ENCODE measurements at regions of chr19 and their contacts with region 1.

Region 1: GRCh38 chr19:49327878-49328544 is 3.0 kb upstream of the SLC6A16 start:
- DNase-seq: peak; percentile 57
- H3K4me3 Mint-ChIP-seq: no peak overlapping the region
- H3K27ac Mint-ChIP-seq: no peak overlapping the region
- H3K4me1 Mint-ChIP-seq: no peaks in the 10 kb centered on the region
- H3K27me3 Mint-ChIP-seq: peaks cover 37% of the 10 kb centered on the region
- CTCF ChIP-seq: peak; percentile 74

Region 2: DNA sequence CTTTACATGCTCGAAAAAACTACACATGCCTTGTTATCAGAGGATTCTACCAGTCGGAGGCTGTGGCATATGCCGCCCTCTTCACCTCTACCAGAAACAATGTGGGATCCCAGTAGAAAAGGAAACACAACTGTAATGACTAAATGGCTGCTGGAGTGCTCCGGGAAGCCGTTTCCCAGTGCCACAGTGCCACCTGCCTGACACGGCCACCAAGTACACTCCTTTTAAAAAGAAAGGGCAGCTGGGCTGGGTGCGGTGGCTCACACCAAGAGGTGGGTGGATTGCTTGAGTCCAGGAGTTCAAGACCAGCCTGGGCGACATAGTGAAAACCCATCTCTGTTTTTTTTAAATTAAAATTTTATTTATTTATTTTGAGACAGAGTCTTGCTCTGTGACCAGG is 103.2 kb before region 1 on chr19:
- CTCF ChIA-PET with region 1: interaction called, 3 read pairs
- intact Hi-C with region 1: loop called (anchors 1 kb)
- DNase-seq: peak; percentile 86
- H3K4me3 Mint-ChIP-seq: no peak overlapping the region
- H3K27ac Mint-ChIP-seq: no peak overlapping the region
- H3K4me1 Mint-ChIP-seq: peaks cover 9% of the 10 kb centered on the region
- H3K27me3 Mint-ChIP-seq: no peaks in the 10 kb centered on the region
- CTCF ChIP-seq: peak; percentile 73